Dorsolateral prefrontal cortex (tissue), 120 donors: ENCODE measurements at regions of chr14 and their contacts with region 1.

Region 1: GRCh38 chr14:89416002-89416995 is 734 bp downstream of the FOXN3 start:
- DNase-seq: peak; percentile 97 to 99 (median 98)
- H3K4me3 ChIP-seq: peak overlapping the region; percentile 63 to 96 (median 90)
- H3K27ac ChIP-seq: peak overlapping the region in 58 of 59 donors; percentile 40 to 94 (median 85)
- H3K27me3 ChIP-seq: no peaks in the 10 kb centered on the region
- CTCF ChIP-seq: peak in 2 of 56 donors; percentile 20 to 26

Region 2: DNA sequence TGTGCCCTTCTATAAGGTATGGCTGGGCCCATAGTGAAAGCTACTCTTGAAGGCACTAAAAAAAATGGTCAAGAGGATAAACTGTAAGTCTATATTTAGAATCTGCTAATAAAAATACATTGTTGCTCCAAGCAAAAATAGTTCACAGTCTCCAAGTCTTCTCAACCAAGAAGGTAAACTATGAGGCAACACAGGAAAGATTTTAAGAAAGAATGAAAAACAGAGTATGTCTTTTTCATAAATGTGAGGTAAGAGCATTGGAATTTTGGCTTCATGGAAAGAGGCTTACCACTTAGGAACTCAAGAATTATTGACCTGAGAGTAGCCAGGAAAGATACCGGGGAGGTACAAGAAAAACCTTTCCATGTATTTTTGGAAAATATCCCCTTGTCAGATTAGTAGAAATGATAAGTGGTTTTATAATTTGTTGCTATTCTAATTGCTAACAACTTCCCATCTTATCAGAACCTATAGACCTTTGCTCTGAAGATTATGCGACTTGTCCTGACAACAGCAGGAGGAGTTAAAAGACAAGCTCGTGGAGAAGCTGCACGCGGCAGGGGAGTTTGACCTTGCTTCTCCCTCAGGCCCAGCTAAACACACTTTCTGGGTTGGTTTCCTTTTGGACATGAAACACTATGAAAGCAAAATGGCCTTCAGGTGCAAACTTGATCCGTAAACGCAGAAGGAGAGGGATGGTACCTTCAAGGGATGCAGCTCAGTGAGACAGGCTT is 237.3 kb before region 1 on chr14:
- intact Hi-C with region 1: loop called in 1 of 2 experiments (anchors 10 kb)
- DNase-seq: no peak
- H3K4me3 ChIP-seq: no peak overlapping the region
- H3K27ac ChIP-seq: peak overlapping the region in 1 of 59 donors; percentile 96
- H3K27me3 ChIP-seq: no peaks in the 10 kb centered on the region
- CTCF ChIP-seq: no peak

Region 3: GRCh38 chr14:89303457-89304435 is 112.6 kb before region 1 on chr14:
- intact Hi-C with region 1: loop called in 1 of 2 experiments (anchors 10 kb)
- DNase-seq: peak in 4 of 10 donors; percentile 46 to 60 (median 50)
- H3K4me3 ChIP-seq: peak overlapping the region in 45 of 59 donors; percentile 0 to 50 (median 24)
- H3K27ac ChIP-seq: peak overlapping the region; percentile 32 to 97 (median 87)
- H3K27me3 ChIP-seq: no peaks in the 10 kb centered on the region
- CTCF ChIP-seq: peak in 1 of 56 donors; percentile 4

Region 4: GRCh38 chr14:89445273-89445973 is 29.1 kb after region 1 on chr14:
- intact Hi-C with region 1: no loop called
- DNase-seq: no peak
- H3K4me3 ChIP-seq: no peak overlapping the region
- H3K27ac ChIP-seq: no peak overlapping the region
- H3K27me3 ChIP-seq: no peaks in the 10 kb centered on the region
- CTCF ChIP-seq: no peak

Region 5: DNA sequence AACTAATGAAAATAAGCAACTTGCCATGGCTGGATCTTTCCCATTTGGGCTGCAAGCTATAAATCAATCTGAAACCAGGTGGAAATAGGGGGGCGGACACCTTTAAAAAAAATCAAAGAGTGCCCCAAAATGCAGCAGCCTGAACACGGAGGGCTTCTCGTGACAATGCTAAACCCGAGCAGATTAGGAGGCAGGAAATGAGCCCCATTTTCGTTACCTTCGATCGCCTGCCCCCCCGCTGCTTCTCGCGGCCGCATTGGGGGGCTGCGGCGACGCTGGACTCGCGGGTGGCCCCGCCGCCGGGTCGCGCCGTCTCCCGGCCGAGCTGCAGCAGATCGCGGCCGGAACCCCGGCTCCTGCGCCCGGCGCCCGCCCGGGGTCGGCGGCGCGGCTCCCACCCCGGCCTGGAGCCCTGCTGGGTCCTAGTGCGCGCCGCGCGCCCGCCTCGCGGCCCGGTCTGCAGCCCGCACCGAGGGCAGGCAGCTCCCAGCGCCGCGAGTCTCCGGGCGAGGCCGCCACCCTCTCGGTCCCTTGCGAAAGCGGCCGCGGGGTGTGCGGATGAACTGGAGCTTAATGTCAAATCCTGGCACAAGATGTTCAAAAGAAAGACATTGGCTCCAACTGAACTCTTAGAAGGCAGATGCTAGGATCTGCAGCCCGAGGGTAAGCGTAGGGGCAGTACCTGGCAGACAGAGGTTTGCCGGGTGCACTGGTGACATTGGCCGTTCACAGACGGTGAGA is 202.7 kb after region 1 on chr14:
- intact Hi-C with region 1: loop called (anchors 2 to 5 kb)
- DNase-seq: peak in 9 of 10 donors; percentile 37 to 81 (median 54)
- H3K4me3 ChIP-seq: peak overlapping the region; percentile 55 to 87 (median 76)
- H3K27ac ChIP-seq: peak overlapping the region in 52 of 59 donors; percentile 16 to 88 (median 77)
- H3K27me3 ChIP-seq: no peaks in the 10 kb centered on the region
- CTCF ChIP-seq: peak in 4 of 56 donors; percentile 8 to 28 (median 12)

Region 6: DNA sequence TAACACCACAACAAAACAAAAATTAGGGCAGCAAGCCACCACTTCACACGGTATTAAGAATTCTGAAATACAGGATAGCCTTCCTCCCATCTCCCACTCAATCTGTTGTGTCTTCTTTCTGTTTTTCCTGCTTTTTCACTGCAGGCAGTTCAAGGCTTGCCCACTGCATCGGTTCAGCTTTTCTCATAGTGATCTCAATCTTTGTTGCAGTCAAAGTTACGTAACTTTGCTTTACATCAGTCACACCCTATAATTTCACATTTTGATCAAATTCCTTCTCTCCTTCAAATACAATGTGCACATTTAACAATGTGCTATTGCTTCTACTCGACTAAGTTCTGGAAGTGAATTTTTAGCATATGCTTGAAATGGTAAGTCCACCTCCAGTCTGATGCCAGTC is 320.6 kb after region 1 on chr14:
- intact Hi-C with region 1: no loop called
- DNase-seq: no peak
- H3K4me3 ChIP-seq: no peak overlapping the region
- H3K27ac ChIP-seq: no peak overlapping the region
- H3K27me3 ChIP-seq: no peaks in the 10 kb centered on the region
- CTCF ChIP-seq: no peak